SK-N-SH (cell line): ENCODE measurements at regions of chr14 and their contacts with region 1.

Region 1: DNA sequence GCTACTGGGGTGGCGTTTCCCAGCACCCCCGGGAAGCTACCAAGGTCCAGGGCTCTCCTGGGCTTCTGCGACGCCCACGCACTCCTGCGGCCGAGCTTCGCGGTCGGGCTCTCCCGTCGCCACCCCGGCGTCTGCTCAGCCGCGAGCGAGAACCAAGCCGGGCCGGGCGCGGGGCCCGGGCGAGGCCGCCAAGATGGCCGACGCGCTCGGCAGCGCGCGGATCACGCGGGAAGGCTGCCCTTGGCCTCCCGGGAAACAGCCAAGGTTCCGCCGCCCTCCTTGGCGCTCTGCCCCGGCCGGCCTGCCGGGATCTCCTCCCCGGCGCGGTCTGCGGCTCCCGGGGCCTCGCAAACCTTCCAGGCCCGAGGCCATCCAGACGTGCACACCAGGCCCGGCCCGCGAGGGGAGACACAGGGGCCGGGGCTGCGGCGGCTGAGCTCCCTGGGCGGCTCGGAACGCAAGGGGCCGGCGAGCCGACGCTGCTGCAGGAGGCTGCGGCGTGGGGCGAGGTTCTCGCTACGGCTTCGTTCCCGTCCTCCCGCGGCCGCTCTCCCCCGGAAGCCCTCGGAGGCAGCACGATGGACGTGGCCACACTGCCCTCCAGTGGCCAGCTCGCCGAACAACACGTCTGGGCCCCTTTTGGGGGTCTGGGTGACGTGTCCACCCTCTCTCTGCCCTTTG is 23.5 kb upstream of the ZFP36L1 start:
- DNase-seq: peak; percentile 98
- H3K4me3 ChIP-seq: peak overlapping the region; percentile 39 to 47; a peak in 3 of 4 replicates
- H3K27ac ChIP-seq: peak overlapping the region; percentile 80 to 88
- H3K4me1 ChIP-seq: peaks cover 19 to 26% of the 10 kb centered on the region in 2 experiments; a peak in 3 of 4 replicates
- H3K27me3 ChIP-seq: no peaks in the 10 kb centered on the region
- CTCF ChIP-seq: peak; percentile 93
- EP300 ChIP-seq: peak in 1 of 2 experiments; percentile 40; a peak in 1 of 4 replicates
- RAD21 ChIP-seq: peak; percentile 96

Region 2: GRCh38 chr14:67837011-67837624 is 979.3 kb before region 1 on chr14:
- CTCF ChIA-PET with region 1: interaction called, 14 read pairs
- POLR2A ChIA-PET with region 1: no interaction called
- DNase-seq: peak; percentile 35
- H3K4me3 ChIP-seq: no peak overlapping the region
- H3K27ac ChIP-seq: no peak overlapping the region
- H3K4me1 ChIP-seq: no peaks in the 10 kb centered on the region
- H3K27me3 ChIP-seq: no peaks in the 10 kb centered on the region
- CTCF ChIP-seq: peak; percentile 85
- EP300 ChIP-seq: no peak
- RAD21 ChIP-seq: peak; percentile 79

Region 3: GRCh38 chr14:67934008-67934481 is 882.4 kb before region 1 on chr14:
- CTCF ChIA-PET with region 1: interaction called, 30 read pairs
- POLR2A ChIA-PET with region 1: no interaction called
- DNase-seq: peak; percentile 53
- H3K4me3 ChIP-seq: no peak overlapping the region
- H3K27ac ChIP-seq: peak overlapping the region in 1 of 2 experiments; percentile 50; a peak in 1 of 4 replicates
- H3K4me1 ChIP-seq: peaks cover 0 to 5% of the 10 kb centered on the region in 2 experiments; a peak in 3 of 4 replicates
- H3K27me3 ChIP-seq: no peaks in the 10 kb centered on the region
- CTCF ChIP-seq: peak; percentile 72
- EP300 ChIP-seq: no peak
- RAD21 ChIP-seq: peak; percentile 68

Region 4: DNA sequence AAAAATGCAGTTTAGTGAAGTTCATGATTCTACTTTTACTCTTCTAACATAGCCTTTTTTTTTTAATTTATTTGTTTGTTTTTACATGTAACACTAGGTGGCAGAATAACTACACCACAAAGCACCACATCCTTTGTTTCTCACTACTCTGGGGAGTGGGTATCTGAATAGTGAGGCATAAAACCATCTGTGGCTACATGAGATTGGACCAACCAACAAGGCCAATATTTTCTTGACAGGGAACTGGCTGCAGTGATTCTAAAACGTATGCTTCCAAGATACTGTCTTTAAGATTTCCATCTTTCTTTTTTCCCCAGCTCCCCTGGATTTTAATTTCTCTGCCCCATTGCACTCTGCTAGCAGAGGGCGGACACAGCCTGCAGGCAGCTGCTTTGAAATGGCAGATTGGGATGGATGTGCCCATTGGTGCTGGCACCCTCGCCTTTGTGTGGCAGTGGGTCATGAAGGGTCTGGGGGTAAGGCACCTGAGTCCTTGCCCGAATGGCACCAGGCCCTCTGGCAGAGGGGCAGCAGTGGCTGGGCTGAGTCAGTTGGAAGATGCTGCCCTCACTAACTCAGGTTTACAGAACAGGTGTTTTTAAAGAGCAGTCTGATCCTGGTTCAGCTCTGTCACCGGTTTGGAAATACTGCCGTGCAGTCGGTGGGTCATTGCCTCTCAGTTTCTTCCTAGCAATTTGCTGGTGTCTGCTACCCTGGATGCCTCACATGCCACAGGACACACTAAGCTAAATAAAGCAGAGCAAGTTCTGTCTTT is 567.7 kb before region 1 on chr14:
- CTCF ChIA-PET with region 1: interaction called, 232 read pairs
- POLR2A ChIA-PET with region 1: no interaction called
- DNase-seq: peak; percentile 64
- H3K4me3 ChIP-seq: no peak overlapping the region
- H3K27ac ChIP-seq: peak overlapping the region; percentile 92 to 93
- H3K4me1 ChIP-seq: peaks cover 11 to 66% of the 10 kb centered on the region in 2 experiments
- H3K27me3 ChIP-seq: no peaks in the 10 kb centered on the region
- CTCF ChIP-seq: peak; percentile 75
- EP300 ChIP-seq: peak in 1 of 2 experiments; percentile 38; a peak in 1 of 4 replicates
- RAD21 ChIP-seq: peak; percentile 98

Region 5: DNA sequence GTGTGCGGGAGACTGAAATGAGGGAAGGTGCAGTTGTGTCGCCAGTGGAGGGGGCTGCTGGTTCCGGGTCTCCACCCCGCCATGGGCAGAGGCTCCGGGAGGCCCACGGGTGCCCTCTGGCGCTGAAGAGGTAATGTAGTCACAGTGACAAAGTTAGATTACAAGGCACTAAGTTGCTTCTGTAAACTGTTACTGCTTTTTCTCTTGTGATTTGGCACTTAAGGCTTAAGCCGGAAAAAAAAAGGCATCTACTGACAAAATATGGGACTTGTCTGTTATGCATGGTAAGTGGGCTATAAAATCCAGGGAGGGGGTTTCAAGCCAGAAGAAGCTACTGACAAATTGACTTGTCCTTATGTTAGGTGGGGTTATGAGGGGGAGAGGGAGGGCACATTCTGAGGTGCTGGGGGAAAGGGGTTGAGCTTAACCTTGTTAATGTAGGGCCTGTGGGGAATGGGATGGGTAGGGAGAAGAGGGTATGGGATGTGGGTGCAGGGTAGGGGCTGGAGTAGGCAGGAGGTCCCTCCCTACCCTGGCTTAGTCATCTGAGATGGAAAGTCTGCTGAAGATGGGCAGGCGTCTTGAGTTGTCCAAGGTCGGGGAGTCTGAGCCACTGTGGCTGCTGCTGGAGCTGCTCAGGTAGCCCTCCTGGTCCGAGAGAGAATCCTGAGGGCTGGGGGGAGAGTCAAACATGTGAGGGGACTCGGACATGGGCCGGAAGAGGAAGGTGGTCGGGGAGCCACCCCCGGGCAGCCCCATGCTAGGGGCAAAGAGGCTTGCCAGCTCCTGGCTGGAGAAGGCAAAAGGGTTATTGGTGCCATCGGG is 27.2 kb before region 1 on chr14:
- CTCF ChIA-PET with region 1: interaction called, 38 read pairs
- POLR2A ChIA-PET with region 1: interaction called, 3 read pairs
- DNase-seq: peak; percentile 95
- H3K4me3 ChIP-seq: peak overlapping the region in 1 of 2 experiments; percentile 52; a peak in 2 of 4 replicates
- H3K27ac ChIP-seq: peak overlapping the region; percentile 58 to 64
- H3K4me1 ChIP-seq: peaks cover 4 to 17% of the 10 kb centered on the region in 2 experiments
- H3K27me3 ChIP-seq: no peaks in the 10 kb centered on the region
- CTCF ChIP-seq: peak; percentile 79
- EP300 ChIP-seq: no peak
- RAD21 ChIP-seq: peak; percentile 95

Region 6: GRCh38 chr14:68843471-68844209 is 27.2 kb after region 1 on chr14:
- CTCF ChIA-PET with region 1: interaction called, 27 read pairs
- POLR2A ChIA-PET with region 1: no interaction called
- DNase-seq: peak; percentile 77
- H3K4me3 ChIP-seq: peak overlapping the region in 1 of 2 experiments; percentile 23; a peak in 2 of 4 replicates
- H3K27ac ChIP-seq: no peak overlapping the region
- H3K4me1 ChIP-seq: peaks cover 0 to 4% of the 10 kb centered on the region in 2 experiments; a peak in 2 of 4 replicates
- H3K27me3 ChIP-seq: no peaks in the 10 kb centered on the region
- CTCF ChIP-seq: peak; percentile 94
- EP300 ChIP-seq: no peak
- RAD21 ChIP-seq: peak; percentile 71